Naive thymus-derived CD4-positive, alpha-beta T cell (primary cell): ENCODE measurements at regions of chr16 and their contacts with region 1.

Region 1: DNA sequence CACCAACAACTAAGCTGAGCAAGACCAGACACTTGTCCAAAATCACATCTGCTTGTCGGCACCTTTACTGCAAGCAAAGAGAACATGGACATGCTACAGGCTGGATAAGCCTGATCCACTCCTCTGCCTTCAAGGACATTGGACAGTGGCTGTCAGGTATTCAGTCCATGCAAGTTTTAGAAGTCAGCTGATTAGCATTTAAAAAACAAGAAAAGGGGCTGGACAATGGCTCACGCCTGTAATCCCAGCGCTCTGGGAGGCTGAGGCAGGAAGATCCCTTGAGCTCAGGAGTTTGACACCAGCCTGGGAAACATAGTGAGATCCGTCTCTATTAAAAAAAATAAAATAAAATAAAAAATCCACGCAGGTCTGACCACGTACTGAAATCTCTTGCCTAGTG is 20.3 kb downstream of the PARN start:
- DNase-seq: no peak
- ATAC-seq: no peak
- H3K4me3 ChIP-seq: no peak overlapping the region
- H3K4me3 Mint-ChIP-seq: no peak overlapping the region
- H3K27ac ChIP-seq: no peak overlapping the region
- H3K27ac Mint-ChIP-seq: no peak overlapping the region
- H3K4me1 ChIP-seq: no peaks in the 10 kb centered on the region
- H3K4me1 Mint-ChIP-seq: peaks cover 0 to 6% (median 0%) of the 10 kb centered on the region in 7 donors
- H3K27me3 ChIP-seq: no peaks in the 10 kb centered on the region
- H3K27me3 Mint-ChIP-seq: no peaks in the 10 kb centered on the region

Region 2: DNA sequence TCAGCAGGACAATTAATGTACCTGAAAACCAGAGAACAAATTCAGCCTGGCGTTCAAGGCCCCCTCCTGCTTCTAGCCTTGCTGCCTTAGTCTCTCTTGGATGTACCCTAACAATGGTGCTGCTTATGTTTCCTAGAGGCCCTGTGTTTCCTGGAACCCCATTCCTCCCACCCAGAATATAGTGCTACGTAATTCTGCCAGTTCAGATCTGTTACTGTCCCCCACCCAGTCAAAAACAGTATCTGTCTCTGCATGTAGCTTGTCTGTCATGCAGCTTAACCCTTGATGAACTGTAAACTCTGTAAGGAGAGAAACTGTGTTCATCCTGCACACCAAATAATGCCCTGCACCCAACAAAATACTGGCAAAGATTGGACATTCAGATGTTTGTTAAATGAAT is 531.8 kb before region 1 on chr16:
- CTCF ChIA-PET with region 1: no interaction called
- POLR2A ChIA-PET with region 1: no interaction called
- intact Hi-C with region 1: loop called in 1 of 2 experiments (anchors 5 kb)
- DNase-seq: no peak
- ATAC-seq: no peak
- H3K4me3 ChIP-seq: no peak overlapping the region
- H3K4me3 Mint-ChIP-seq: no peak overlapping the region
- H3K27ac ChIP-seq: no peak overlapping the region
- H3K27ac Mint-ChIP-seq: no peak overlapping the region
- H3K4me1 ChIP-seq: no peaks in the 10 kb centered on the region
- H3K4me1 Mint-ChIP-seq: peaks cover 2 to 41% (median 16%) of the 10 kb centered on the region in 7 donors
- H3K27me3 ChIP-seq: no peaks in the 10 kb centered on the region
- H3K27me3 Mint-ChIP-seq: no peaks in the 10 kb centered on the region